ENCODE measurements at regions of chr7 and their contacts with region 1.

Region 1: DNA sequence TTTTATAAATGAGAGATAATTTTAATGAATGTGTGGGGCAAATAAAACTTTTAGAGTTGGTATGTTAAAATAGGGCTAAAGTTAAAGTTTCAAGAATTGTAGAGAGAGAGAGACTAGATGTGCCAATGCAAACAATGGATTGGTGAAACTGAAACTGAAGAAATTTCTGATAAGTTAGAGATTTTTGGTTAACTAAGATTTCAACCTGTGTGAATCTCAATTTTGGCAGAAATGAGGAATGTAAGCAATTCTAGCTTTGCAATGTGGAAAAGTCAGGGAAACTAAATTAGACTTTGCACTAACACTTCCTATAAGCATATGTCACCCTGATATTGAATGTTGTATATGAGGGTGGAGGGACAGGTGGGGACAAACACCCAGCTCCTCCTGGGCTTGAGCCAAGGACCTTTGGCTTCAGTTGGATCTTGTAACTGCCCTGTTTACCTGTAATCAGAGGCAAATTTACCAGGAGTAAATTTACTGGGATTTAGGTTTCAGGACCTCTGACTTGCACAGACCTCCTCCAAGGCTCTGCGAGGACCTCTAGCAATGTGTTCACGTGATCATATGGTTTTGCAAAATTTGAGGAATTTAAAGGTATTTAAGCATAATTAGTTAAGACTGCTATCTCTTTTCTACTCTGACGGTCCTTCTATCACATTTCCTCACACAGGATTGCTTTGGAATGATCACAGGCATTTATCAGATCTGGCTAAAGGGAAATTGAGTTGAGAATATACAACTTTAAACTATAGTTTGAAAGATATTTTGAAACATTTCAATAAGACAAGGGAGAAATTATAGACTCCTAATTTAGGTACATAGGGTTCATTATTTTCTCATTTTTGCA is 33.1 kb upstream of the RPA3 start:
- DNase-seq: no peak
- H3K4me3 ChIP-seq: no peak overlapping the region
- H3K27ac ChIP-seq: no peak overlapping the region
- H3K4me1 ChIP-seq: peaks cover 0 to 9% (median 0%) of the 10 kb centered on the region in 4 donors
- H3K27me3 ChIP-seq: no peaks in the 10 kb centered on the region
- CTCF ChIP-seq: no peak

Region 2: GRCh38 chr7:7681179-7681935 is 70.1 kb before region 1 on chr7:
- intact Hi-C with region 1: loop called (anchors 10 kb)
- DNase-seq: peak in 1 of 2 donors; percentile 41
- H3K4me3 ChIP-seq: no peak overlapping the region
- H3K27ac ChIP-seq: peak overlapping the region in 1 of 2 donors; percentile 17
- H3K4me1 ChIP-seq: peaks cover 0 to 27% (median 7%) of the 10 kb centered on the region in 4 donors
- H3K27me3 ChIP-seq: no peaks in the 10 kb centered on the region
- CTCF ChIP-seq: peak; percentile 61 to 72